Prostate gland (tissue), 2 donors: ENCODE measurements at regions of chr10 and their contacts with region 1.

Region 1: GRCh38 chr10:24724381-24725228 is 918 bp upstream of the ARHGAP21 start:
- DNase-seq: peak; percentile 99
- H3K4me3 ChIP-seq: peak overlapping the region; percentile 68 to 73
- H3K27ac ChIP-seq: peak overlapping the region; percentile 93 to 96
- H3K4me1 ChIP-seq: no peaks in the 10 kb centered on the region
- H3K27me3 ChIP-seq: no peaks in the 10 kb centered on the region
- CTCF ChIP-seq: peak in 1 of 4 experiments; percentile 3
- POLR2A ChIP-seq: peak; percentile 97

Region 2: GRCh38 chr10:24589265-24589664 is 135.3 kb before region 1 on chr10:
- intact Hi-C with region 1: no loop called
- DNase-seq: no peak
- H3K4me3 ChIP-seq: no peak overlapping the region
- H3K27ac ChIP-seq: no peak overlapping the region
- H3K4me1 ChIP-seq: no peaks in the 10 kb centered on the region
- H3K27me3 ChIP-seq: no peaks in the 10 kb centered on the region
- CTCF ChIP-seq: no peak
- POLR2A ChIP-seq: no peak

Region 3: GRCh38 chr10:24806262-24806661 is 81.7 kb after region 1 on chr10:
- intact Hi-C with region 1: no loop called
- DNase-seq: no peak
- H3K4me3 ChIP-seq: no peak overlapping the region
- H3K27ac ChIP-seq: no peak overlapping the region
- H3K4me1 ChIP-seq: no peaks in the 10 kb centered on the region
- H3K27me3 ChIP-seq: no peaks in the 10 kb centered on the region
- CTCF ChIP-seq: no peak
- POLR2A ChIP-seq: no peak

Region 4: GRCh38 chr10:25016376-25017154 is 292.0 kb after region 1 on chr10 and contains the start of gene THNSL1:
- intact Hi-C with region 1: loop called (anchors 5 kb)
- DNase-seq: peak; percentile 98
- H3K4me3 ChIP-seq: peak within 1 kb of the TSS; percentile 52 to 57
- H3K27ac ChIP-seq: peak within 1 kb of the TSS; percentile 86 to 89
- H3K4me1 ChIP-seq: no peaks in the 10 kb centered on the region
- H3K27me3 ChIP-seq: no peaks in the 10 kb centered on the region
- CTCF ChIP-seq: peak in 2 of 4 experiments; percentile 2 to 6
- POLR2A ChIP-seq: peak; percentile 68
- total RNA-seq, gene THNSL1: 2.4 to 4.3 TPM